ENCODE measurements at regions of chr3 and their contacts with region 1.

Region 1: GRCh38 chr3:172501560-172501959 is 21.7 kb downstream of the TNFSF10 start:
- DNase-seq: no peak
- ATAC-seq: no peak
- H3K4me3 ChIP-seq: no peak overlapping the region
- H3K27ac ChIP-seq: no peak overlapping the region
- H3K4me1 ChIP-seq: no peaks in the 10 kb centered on the region
- H3K27me3 ChIP-seq: no peaks in the 10 kb centered on the region
- CTCF ChIP-seq: no peak

Region 2: DNA sequence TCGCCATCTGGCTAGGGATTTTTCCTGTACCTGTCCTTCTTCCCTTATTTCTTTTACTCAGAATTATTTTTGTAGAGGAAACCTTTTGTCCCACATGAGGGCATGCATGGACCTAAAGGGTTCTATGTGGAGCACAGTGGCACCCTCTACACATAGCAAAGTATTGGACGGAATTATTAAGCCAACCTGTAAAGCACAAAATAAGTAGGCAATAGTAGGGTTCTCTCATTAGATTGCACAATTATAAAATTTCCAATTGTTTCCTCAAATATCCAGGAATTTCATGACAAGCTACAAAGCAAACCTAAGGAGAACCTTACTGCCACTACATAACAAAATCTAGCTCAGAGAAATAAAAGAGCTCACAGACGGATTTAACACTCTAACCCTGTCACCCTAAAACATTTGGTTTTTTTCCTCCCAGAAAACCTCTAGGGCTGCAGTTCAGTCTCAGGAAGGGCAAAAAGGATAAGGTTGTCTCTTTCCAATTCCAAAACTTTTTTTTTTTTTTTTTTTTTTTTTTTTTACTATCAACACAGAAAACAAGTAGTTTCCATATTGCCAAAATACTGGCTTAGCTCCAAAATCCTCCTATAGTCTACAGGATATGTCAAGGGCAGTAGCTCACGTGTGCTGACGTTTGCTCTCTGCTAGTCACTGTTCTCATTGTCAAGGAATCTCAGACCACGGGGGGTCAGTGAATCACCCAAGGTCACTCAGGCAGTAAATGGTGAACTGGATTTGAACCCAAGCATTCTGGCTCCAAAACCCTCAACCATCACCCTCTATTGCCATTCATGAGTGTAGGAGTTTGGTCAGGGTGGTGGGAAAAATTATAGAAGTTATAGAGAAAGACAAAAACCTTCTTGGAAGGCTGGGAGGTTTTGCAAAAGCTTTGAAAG is 157.0 kb after region 1 on chr3:
- intact Hi-C with region 1: loop called in 1 of 10 experiments (anchors 5 kb)
- DNase-seq: no peak
- ATAC-seq: peak; percentile 46 to 89 (median 78)
- H3K4me3 ChIP-seq: no peak overlapping the region
- H3K27ac ChIP-seq: peak overlapping the region in 6 of 10 donors; percentile 22 to 54 (median 34)
- H3K4me1 ChIP-seq: peaks cover 0 to 26% (median 20%) of the 10 kb centered on the region in 9 donors
- H3K27me3 ChIP-seq: no peaks in the 10 kb centered on the region
- CTCF ChIP-seq: no peak

Measured in heart right ventricle (tissue), 16 donors.